ENCODE measurements at regions of chr17 and their contacts with region 1.

Region 1: GRCh38 chr17:65294179-65294720 is 157.1 kb downstream of the RGS9 start:
- DNase-seq: peak; percentile 68 to 75 (median 69)
- ATAC-seq: peak; percentile 100
- H3K4me3 ChIP-seq: no peak overlapping the region
- H3K27ac ChIP-seq: no peak overlapping the region
- H3K4me1 ChIP-seq: no peaks in the 10 kb centered on the region; a peak in 1 of 5 replicates
- H3K27me3 ChIP-seq: peaks cover 5 to 33% of the 10 kb centered on the region in 2 experiments; a peak in 2 of 5 replicates
- CTCF ChIP-seq: peak; percentile 75 to 88 (median 80)
- EP300 ChIP-seq: no peak
- POLR2A ChIP-seq: no peak
- RAD21 ChIP-seq: peak; percentile 62 to 84

Region 2: GRCh38 chr17:65283704-65284103 is 10.5 kb before region 1 on chr17:
- CTCF ChIA-PET with region 1: no interaction called
- POLR2A ChIA-PET with region 1: no interaction called
- in situ Hi-C with region 1: no loop called
- intact Hi-C with region 1: no loop called
- DNase-seq: no peak
- ATAC-seq: no peak
- H3K4me3 ChIP-seq: no peak overlapping the region
- H3K27ac ChIP-seq: no peak overlapping the region
- H3K4me1 ChIP-seq: no peaks in the 10 kb centered on the region
- H3K27me3 ChIP-seq: peaks cover 3 to 24% of the 10 kb centered on the region in 2 experiments; a peak in 3 of 5 replicates
- CTCF ChIP-seq: no peak
- EP300 ChIP-seq: no peak
- POLR2A ChIP-seq: no peak
- RAD21 ChIP-seq: no peak

Region 3: GRCh38 chr17:65370669-65371131 is 76.5 kb after region 1 on chr17:
- CTCF ChIA-PET with region 1: no interaction called
- POLR2A ChIA-PET with region 1: no interaction called
- in situ Hi-C with region 1: no loop called
- intact Hi-C with region 1: no loop called
- DNase-seq: no peak
- ATAC-seq: no peak
- H3K4me3 ChIP-seq: no peak overlapping the region
- H3K27ac ChIP-seq: no peak overlapping the region
- H3K4me1 ChIP-seq: 0 out of 5 replicates have a peak, but pooled peaks cover 0 to 5% of the 10 kb centered on the region in 2 experiments
- H3K27me3 ChIP-seq: peaks cover 7 to 27% of the 10 kb centered on the region in 2 experiments; a peak in 3 of 5 replicates
- CTCF ChIP-seq: no peak
- EP300 ChIP-seq: no peak
- POLR2A ChIP-seq: no peak
- RAD21 ChIP-seq: no peak

Region 4: DNA sequence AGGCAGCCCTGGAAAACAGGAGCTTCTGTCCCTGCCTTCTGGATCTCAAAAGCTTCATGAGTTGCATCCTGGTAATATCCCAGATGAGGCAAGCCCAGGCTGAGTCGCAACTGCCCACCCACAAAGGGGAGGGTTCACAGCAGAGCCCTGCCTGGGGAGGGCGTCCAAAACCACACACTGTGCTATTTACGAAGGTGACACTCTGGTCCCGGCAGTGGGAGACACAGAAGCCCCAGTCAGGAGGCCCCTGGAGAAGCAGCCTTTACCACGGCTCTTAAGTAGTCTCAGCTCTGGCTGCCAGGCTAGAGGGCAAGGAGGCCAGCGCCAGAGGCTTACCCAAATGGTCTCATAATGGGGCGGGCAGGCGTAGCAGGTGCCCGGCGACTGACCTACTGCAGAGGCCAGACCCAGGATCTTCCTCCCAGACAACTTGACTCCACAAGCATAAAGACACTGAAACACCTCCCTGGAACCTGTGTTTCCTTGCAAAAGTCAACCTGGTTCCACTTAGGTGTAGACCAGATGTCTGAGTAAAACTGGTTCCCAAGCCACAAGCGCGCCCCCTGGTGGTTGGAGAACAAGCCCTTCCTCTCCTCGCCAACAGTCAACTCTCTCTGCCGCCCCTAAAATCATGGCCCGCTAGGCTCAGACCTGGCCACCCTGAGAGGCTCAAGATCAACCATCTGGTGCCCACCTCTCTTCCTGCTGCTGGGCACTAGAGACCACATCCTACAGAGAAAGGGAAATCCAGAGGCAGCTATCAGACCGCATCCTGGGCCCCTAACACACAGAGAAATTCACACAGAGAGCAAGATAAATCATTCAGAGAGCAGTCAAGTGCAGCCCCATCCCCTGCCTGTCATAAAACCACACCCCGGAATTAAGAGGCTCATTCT is 262.0 kb after region 1 on chr17:
- CTCF ChIA-PET with region 1: interaction called, 3 read pairs
- POLR2A ChIA-PET with region 1: no interaction called
- in situ Hi-C with region 1: no loop called
- intact Hi-C with region 1: loop called (anchors 1 kb)
- DNase-seq: peak; percentile 64 to 81 (median 71)
- ATAC-seq: peak; percentile 82
- H3K4me3 ChIP-seq: no peak overlapping the region
- H3K27ac ChIP-seq: no peak overlapping the region
- H3K4me1 ChIP-seq: peaks cover 0 to 15% of the 10 kb centered on the region in 2 experiments; a peak in 3 of 5 replicates
- H3K27me3 ChIP-seq: no peaks in the 10 kb centered on the region; a peak in 1 of 5 replicates
- CTCF ChIP-seq: peak; percentile 67 to 88 (median 75)
- EP300 ChIP-seq: no peak
- POLR2A ChIP-seq: no peak
- RAD21 ChIP-seq: peak; percentile 48 to 62

Measured in K562 (cell line).